ENCODE measurements at regions of chr1 and their contacts with region 1.

Region 1: DNA sequence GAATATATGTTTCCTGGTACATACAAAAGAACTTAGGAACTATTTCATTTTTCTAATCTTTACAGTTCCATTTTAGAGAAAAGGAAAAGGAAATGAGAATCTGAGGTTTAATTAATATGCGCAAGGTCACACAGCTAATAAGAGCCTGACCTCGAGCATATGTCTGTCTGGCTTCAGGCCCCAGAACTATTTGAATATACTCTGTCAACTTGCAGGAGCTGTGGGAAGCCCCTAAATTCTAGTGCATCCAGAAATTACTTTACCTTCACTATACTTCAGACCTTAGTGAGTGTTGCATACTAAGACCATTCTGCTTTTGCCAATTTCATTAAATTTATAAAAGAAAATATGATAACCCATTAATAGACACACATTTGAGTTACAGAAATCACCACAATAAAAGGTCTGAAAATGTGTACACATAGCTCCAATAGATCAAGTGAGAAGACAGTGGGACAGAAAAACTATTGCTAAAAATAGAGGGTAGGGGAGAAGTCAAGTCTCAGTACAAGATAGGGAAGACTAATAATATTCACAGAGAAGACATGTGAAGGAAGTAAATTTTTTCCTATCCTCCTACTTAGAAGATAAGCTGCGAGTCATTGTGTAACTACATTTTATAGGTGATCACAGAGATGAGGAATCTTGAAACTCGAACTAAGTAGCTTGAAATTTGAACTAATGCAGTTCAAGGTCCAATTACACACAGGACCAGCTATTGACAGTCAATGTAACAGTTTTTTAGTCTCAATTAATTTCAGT is 3.8 kb downstream of the RGS13 start:
- DNase-seq: peak in 1 of 2 experiments; percentile 11
- H3K4me3 ChIP-seq: no peak overlapping the region
- H3K4me3 Mint-ChIP-seq: no peak overlapping the region
- H3K27ac Mint-ChIP-seq: peak overlapping the region; percentile 6
- H3K4me1 ChIP-seq: peaks cover 20% of the 10 kb centered on the region
- H3K4me1 Mint-ChIP-seq: no peaks in the 10 kb centered on the region
- H3K27me3 ChIP-seq: no peaks in the 10 kb centered on the region
- H3K27me3 Mint-ChIP-seq: no peaks in the 10 kb centered on the region
- CTCF ChIP-seq: no peak

Region 2: GRCh38 chr1:192516776-192517297 is 123.0 kb before region 1 on chr1:
- CTCF ChIA-PET with region 1: no interaction called
- POLR2A ChIA-PET with region 1: no interaction called
- intact Hi-C with region 1: no loop called
- DNase-seq: no peak
- H3K4me3 ChIP-seq: no peak overlapping the region
- H3K4me3 Mint-ChIP-seq: no peak overlapping the region
- H3K27ac Mint-ChIP-seq: no peak overlapping the region
- H3K4me1 ChIP-seq: peaks cover 7% of the 10 kb centered on the region; the same call in 1 of the 2 replicates
- H3K4me1 Mint-ChIP-seq: peaks cover 11% of the 10 kb centered on the region
- H3K27me3 ChIP-seq: no peaks in the 10 kb centered on the region; the same call in 1 of the 2 replicates
- H3K27me3 Mint-ChIP-seq: peaks cover 10% of the 10 kb centered on the region
- CTCF ChIP-seq: no peak

Region 3: DNA sequence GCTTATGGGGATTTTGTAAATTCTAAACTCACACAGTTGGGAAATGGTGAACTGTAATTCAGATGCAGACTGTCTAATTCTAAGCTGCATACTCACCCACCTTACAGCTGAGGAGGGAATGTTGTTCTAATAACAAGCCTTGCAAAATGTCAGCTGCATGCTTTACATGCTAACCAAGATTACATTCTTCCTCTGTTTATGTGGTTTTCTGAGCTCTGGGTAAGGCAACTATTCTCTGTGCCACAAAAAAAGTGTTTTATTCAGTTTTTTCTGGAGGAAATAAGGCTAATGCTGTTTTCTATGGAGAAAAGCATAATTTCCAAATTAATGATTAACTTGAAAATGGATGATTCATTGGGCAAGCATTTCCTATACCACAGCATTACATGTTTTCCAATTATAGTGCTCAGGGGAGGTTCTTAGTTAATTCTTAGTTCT is 61.1 kb after region 1 on chr1:
- CTCF ChIA-PET with region 1: no interaction called
- POLR2A ChIA-PET with region 1: no interaction called
- intact Hi-C with region 1: loop called (anchors 2 kb)
- DNase-seq: peak in 1 of 2 experiments; percentile 9
- H3K4me3 ChIP-seq: no peak overlapping the region
- H3K4me3 Mint-ChIP-seq: peak overlapping the region; percentile 19
- H3K27ac Mint-ChIP-seq: no peak overlapping the region
- H3K4me1 ChIP-seq: peaks cover 34% of the 10 kb centered on the region
- H3K4me1 Mint-ChIP-seq: no peaks in the 10 kb centered on the region
- H3K27me3 ChIP-seq: no peaks in the 10 kb centered on the region
- H3K27me3 Mint-ChIP-seq: no peaks in the 10 kb centered on the region
- CTCF ChIP-seq: no peak

Region 4: GRCh38 chr1:192713921-192714320 is 74.1 kb after region 1 on chr1:
- CTCF ChIA-PET with region 1: no interaction called
- POLR2A ChIA-PET with region 1: no interaction called
- intact Hi-C with region 1: no loop called
- DNase-seq: no peak
- H3K4me3 ChIP-seq: no peak overlapping the region
- H3K4me3 Mint-ChIP-seq: no peak overlapping the region
- H3K27ac Mint-ChIP-seq: no peak overlapping the region
- H3K4me1 ChIP-seq: no peaks in the 10 kb centered on the region
- H3K4me1 Mint-ChIP-seq: no peaks in the 10 kb centered on the region
- H3K27me3 ChIP-seq: no peaks in the 10 kb centered on the region
- H3K27me3 Mint-ChIP-seq: peaks cover 3% of the 10 kb centered on the region
- CTCF ChIP-seq: no peak

Measured in Caco-2 (cell line).